Activated naive CD4-positive, alpha-beta T cell treated with anti-CD3 and anti-CD28 coated beads for 36 hours (primary cell): ENCODE measurements at regions of chr7 and their contacts with region 1.

Region 1: GRCh38 chr7:18666107-18666728 is 170.7 kb downstream of the HDAC9 start:
- DNase-seq: peak; percentile 75
- H3K4me3 Mint-ChIP-seq: no peak overlapping the region
- H3K27ac Mint-ChIP-seq: no peak overlapping the region
- H3K4me1 Mint-ChIP-seq: no peaks in the 10 kb centered on the region
- H3K27me3 Mint-ChIP-seq: peaks cover 2% of the 10 kb centered on the region

Region 2: GRCh38 chr7:17680943-17681351 is 985.3 kb before region 1 on chr7:
- CTCF ChIA-PET with region 1: no interaction called
- intact Hi-C with region 1: loop called (anchors 5 kb)
- DNase-seq: no peak
- H3K4me3 Mint-ChIP-seq: no peak overlapping the region
- H3K27ac Mint-ChIP-seq: peak overlapping the region; percentile 9
- H3K4me1 Mint-ChIP-seq: no peaks in the 10 kb centered on the region
- H3K27me3 Mint-ChIP-seq: no peaks in the 10 kb centered on the region

Region 3: DNA sequence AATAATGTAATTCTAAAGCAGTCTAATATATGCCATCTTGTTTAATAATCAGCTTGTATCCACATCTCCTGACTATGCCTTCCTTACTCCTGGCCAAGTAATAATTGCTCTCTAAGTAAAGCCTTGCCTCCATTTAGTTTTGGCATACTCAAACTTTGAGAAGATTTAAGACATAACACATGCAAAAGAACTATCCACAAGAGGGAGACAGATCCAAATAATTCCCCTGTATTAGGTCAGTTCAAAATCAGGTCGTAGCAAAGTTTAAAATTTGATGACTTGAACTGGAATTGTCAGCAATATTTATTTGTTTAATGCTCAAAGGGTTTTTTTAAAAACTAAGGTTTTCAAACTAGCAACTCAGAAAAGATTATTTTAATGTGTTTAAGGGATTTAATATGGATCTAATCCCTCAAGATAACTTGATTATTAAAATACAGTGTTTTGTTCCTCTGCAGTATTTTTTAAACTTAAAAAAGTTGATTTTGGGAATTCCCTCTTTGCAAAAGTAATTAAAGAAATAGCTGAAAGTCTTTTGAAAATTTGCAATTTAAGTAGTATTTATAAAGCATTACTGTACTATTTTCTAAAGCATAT is 75.4 kb before region 1 on chr7:
- CTCF ChIA-PET with region 1: interaction called, 4 read pairs
- intact Hi-C with region 1: loop called (anchors 1 kb)
- DNase-seq: no peak
- H3K4me3 Mint-ChIP-seq: no peak overlapping the region
- H3K27ac Mint-ChIP-seq: no peak overlapping the region
- H3K4me1 Mint-ChIP-seq: no peaks in the 10 kb centered on the region
- H3K27me3 Mint-ChIP-seq: no peaks in the 10 kb centered on the region

Region 4: DNA sequence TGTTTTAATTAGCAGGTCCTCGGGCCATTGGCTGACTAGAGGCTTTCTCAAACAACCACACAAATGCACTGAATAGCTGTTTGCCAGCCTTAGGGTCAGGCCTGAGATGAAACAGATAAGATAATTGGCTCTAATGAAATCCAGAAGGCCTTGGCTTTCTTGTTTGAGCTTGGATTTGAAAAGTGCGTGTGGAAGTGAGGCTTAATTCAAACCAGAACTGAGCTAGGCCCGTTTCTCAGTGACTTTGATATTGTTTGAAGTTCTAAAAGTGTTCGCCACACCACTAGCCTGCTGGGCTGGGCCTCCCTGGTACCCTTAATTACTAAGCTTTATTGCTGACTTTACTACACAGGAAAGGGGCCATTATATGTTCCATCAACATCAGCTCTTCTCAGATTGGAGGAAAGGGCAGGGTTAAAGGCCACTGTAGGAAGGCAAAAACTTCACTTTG is 180.6 kb after region 1 on chr7:
- CTCF ChIA-PET with region 1: no interaction called
- intact Hi-C with region 1: no loop called
- DNase-seq: no peak
- H3K4me3 Mint-ChIP-seq: no peak overlapping the region
- H3K27ac Mint-ChIP-seq: no peak overlapping the region
- H3K4me1 Mint-ChIP-seq: no peaks in the 10 kb centered on the region
- H3K27me3 Mint-ChIP-seq: no peaks in the 10 kb centered on the region

Region 5: DNA sequence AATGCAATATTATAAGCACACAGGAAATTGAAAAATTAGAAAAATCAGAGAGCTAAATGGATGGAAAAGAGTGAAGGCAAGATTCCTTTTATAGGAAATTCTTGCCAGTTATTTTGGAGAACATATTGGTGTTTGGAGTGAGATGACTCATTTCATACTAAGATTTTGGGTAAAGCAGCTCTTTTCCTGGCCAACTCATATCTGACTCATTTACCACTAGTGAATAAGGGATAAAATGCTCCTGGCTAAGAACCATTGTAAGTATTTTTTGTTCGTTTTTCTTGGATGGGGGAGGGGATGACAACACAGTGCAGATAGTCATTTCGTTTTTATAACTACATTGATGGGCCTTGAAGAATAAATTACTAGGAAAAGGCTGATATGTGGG is 311.9 kb after region 1 on chr7:
- CTCF ChIA-PET with region 1: no interaction called
- intact Hi-C with region 1: no loop called
- DNase-seq: no peak
- H3K4me3 Mint-ChIP-seq: no peak overlapping the region
- H3K27ac Mint-ChIP-seq: no peak overlapping the region
- H3K4me1 Mint-ChIP-seq: no peaks in the 10 kb centered on the region
- H3K27me3 Mint-ChIP-seq: no peaks in the 10 kb centered on the region